ENCODE measurements at regions of chr5 and their contacts with region 1.

Region 1: DNA sequence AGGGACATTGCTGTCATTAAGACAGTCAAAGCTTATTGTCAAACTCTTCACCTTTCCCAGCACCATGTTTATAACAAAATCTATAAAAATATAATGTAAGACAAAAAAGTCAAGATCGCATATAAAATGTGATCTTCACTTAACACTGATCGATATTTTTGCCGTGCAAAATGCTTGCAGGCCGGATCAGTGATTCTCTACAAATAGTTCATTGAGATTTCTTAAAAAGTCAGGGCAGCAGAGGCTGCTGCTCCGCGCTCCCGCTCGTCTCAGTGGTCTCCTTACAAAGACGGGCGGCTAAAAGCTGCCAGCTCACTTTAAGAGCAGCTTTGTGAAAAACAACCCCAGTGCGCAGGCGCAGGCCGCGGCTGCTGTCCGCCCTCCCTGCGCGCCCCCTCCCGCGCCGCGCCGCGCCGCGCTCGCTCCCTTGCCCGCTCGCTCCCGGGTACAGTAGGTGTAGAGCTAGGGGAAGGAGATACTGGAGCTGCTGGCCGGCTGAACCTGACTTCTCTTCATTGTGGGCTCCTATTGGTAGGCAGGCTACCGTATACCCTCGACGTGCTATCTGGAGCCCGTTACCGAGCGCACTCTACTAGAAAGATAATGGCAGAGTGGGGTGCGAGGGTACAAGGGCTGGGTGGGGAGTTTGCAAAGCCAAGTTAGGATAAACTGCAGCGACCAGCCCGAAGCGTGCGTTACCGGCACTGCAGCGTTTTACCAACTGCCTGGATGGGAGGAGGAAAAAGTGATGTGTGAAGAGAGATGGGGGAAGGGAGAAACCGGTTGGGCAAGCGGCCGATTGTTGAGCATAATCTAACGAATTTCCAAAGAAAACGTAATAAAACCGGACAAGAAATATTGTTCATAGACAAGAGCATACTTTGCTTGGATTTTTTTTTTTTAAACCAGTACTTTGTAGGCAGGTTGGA is at the start of gene ARRDC3:
- H3K4me3 Mint-ChIP-seq: peak within 1 kb of the TSS; percentile 94
- H3K27ac Mint-ChIP-seq: peak within 1 kb of the TSS; percentile 98
- H3K4me1 Mint-ChIP-seq: peaks cover 15% of the 10 kb centered on the region
- H3K27me3 Mint-ChIP-seq: no peaks in the 10 kb centered on the region

Region 2: DNA sequence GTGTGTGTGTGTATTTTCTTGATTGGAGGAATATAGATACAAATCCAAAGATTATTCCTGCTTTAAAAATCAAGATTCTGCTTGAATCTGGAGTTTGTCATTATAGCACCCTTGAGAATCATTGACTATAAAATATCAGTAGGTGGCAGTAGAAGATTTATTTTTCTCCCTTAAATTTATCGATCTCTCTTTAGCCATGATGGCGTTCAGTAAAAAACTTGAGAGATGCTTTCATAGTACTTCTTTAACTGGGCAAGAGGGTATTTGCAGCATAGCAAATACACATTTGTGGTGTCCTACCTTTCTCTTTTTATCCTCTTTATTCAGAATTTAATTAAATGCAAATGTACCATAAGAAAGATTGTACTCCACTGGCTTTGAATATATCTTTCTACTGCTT is 517.0 kb before region 1 on chr5:
- intact Hi-C with region 1: loop called (anchors 5 kb)
- H3K4me3 Mint-ChIP-seq: no peak overlapping the region
- H3K27ac Mint-ChIP-seq: no peak overlapping the region
- H3K4me1 Mint-ChIP-seq: no peaks in the 10 kb centered on the region
- H3K27me3 Mint-ChIP-seq: no peaks in the 10 kb centered on the region

Region 3: DNA sequence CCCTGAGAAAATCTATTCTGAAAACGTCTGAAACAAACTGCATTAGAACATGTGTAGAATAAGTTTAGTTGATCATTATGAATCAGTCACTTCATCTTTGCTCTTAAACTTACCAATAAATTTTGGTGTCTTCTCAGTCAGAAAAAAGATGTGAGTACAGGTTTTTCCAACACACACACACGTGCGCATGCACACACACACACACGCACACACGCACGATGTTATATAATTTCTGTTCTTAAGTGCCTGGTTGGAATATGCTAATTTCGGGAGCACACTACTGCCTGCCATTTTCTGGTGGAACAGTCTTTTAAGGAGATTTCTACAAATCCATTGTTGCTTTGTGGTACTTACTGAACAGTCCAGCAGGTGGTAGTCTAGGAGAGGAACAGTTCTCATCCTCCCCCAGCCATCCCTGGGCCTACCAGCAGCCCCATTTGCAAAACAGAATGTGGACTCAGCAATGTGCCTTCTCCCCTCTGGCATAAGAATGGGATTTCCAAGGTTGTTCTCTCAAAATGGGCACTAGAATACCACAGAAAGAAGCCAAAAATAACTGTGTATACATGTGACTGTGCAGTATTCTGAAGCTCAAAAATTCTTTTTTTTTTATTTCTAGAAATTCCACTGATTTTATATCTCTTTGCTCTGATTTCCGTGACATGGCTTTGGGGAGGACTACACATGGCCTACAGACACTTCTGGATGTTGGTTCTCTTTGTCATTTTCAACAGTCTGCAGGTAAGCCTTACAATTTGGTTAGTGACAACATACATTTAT is 281.5 kb before region 1 on chr5:
- intact Hi-C with region 1: loop called (anchors 1 kb)
- H3K4me3 Mint-ChIP-seq: no peak overlapping the region
- H3K27ac Mint-ChIP-seq: no peak overlapping the region
- H3K4me1 Mint-ChIP-seq: peaks cover 18% of the 10 kb centered on the region
- H3K27me3 Mint-ChIP-seq: no peaks in the 10 kb centered on the region

Region 4: GRCh38 chr5:91183737-91184136 is 199.6 kb before region 1 on chr5:
- intact Hi-C with region 1: loop called (anchors 5 kb)
- H3K4me3 Mint-ChIP-seq: peak overlapping the region; percentile 23
- H3K27ac Mint-ChIP-seq: peak overlapping the region; percentile 85
- H3K4me1 Mint-ChIP-seq: peaks cover 45% of the 10 kb centered on the region
- H3K27me3 Mint-ChIP-seq: no peaks in the 10 kb centered on the region

Region 5: DNA sequence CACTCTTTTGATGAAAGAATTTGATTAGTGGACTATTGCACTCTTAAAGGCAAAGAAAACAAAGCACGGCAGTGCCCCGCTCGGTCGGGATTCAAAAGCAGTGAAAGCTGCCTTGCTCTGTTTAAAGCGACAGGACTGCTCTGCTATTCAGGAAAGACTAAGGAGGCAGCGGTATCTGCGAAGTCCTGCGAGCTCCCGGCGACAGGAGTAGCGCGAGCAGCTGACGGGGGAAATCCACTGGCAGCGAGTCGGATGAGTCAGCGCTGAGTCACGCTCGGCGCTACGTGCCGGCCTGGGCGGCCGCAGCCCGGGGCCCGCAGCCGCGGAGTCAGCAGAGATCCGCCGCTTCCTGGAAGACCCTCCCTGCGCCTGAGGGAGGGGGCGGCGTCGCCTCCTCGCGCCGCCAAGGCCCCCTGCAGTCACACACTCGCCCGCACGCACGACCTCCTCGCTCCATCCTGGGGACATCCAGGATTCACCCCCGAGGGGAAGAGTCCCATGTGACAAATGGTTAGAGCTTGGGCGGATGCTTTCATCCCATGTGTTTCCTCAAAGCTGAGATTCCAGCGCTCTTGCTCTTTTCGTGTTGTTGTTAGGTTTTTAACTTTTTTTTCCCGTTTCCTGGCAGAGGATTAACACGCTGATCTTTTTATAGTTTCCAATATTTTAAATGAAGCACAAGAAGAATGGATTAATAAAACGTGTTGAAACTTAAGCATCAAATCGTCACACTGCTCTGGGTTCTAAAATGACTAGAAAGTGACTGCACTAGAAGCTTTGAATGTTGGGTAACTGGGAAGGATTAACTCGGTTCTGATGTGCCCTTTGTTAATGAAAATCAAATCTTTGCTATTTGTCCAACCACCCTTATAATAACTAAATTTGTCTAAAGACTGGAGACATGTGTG is 102.7 kb before region 1 on chr5:
- intact Hi-C with region 1: loop called (anchors 1 kb)
- H3K4me3 Mint-ChIP-seq: peak overlapping the region; percentile 81
- H3K27ac Mint-ChIP-seq: peak overlapping the region; percentile 100
- H3K4me1 Mint-ChIP-seq: peaks cover 54% of the 10 kb centered on the region
- H3K27me3 Mint-ChIP-seq: peaks cover 1% of the 10 kb centered on the region

Region 6: DNA sequence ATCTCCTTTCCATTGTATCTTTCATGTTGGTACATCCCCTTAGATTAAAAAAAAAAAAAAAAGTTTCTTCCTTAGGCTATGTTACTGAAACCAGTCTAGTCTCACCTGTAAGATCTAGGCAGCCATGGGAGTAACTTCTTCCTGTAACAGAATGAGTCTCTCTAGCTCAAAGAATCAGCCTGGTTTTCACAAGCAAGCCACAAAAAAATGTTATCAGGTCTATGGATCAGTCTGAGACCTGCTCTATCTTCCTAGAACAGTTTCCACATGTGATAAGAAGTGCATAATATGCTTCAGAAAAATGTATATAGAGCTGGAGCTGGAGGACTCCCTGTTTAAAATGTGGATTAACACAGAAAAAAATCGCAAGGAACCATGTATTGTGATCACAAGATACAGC is 54.0 kb before region 1 on chr5:
- intact Hi-C with region 1: no loop called
- H3K4me3 Mint-ChIP-seq: no peak overlapping the region
- H3K27ac Mint-ChIP-seq: no peak overlapping the region
- H3K4me1 Mint-ChIP-seq: peaks cover 11% of the 10 kb centered on the region
- H3K27me3 Mint-ChIP-seq: peaks cover 1% of the 10 kb centered on the region

Region 7: DNA sequence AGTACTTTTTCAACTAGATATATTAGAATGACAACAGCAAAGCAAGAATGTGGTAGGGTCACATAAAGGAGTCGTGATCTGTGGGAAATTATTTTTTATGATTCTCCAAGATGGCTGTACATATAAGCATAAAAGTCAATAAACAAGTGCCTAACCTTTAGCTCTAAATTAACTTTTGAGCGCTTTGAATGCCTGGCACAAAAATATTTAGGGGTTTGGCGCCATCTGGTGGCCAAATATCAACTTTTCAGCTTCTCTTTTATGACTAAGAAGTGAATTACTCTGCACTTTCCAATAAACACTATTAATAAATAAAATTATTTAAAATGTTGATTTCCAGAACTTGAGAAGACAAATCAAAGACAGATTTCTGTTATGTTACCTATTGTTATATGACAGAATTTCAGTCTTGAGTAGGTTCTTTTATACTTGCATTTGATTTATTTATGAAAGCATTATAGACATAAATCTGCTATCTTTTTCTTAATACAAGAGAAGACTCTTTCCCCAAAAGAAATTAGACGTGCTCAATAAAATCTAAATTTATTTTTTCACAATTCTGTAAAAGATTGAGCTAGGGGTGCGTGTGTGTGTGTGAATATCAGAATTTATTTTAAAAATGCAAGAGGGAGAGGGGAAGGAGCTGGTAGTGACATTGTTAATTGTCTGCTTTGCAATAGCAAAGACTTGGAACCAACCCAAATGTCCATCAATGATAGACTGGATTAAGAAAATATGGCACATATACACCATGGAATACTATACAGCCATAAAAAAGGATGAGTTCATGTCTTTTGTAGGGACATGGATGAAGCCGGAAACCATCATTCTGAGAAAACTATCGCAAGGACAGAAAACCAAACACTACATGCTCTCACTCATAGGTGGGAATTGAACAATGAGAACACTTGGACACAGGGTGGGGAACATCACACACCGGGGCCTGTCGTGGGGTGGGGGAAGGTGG is 36.6 kb after region 1 on chr5:
- intact Hi-C with region 1: loop called (anchors 2 kb)
- H3K4me3 Mint-ChIP-seq: no peak overlapping the region
- H3K27ac Mint-ChIP-seq: no peak overlapping the region
- H3K4me1 Mint-ChIP-seq: peaks cover 4% of the 10 kb centered on the region
- H3K27me3 Mint-ChIP-seq: no peaks in the 10 kb centered on the region

Region 8: GRCh38 chr5:91977579-91977978 is 594.3 kb after region 1 on chr5:
- intact Hi-C with region 1: no loop called
- H3K4me3 Mint-ChIP-seq: no peak overlapping the region
- H3K27ac Mint-ChIP-seq: no peak overlapping the region
- H3K4me1 Mint-ChIP-seq: no peaks in the 10 kb centered on the region
- H3K27me3 Mint-ChIP-seq: no peaks in the 10 kb centered on the region

Measured in dendritic cell treated with granulocyte-macrophage colony-stimulating factor and Interleukin-4, amounts not matched to agents 40 ng/mL and 50 ng/mL, for 4 days (primary cell).